SK-N-SH (cell line): ENCODE measurements at regions of chr11 and their contacts with region 1.

Region 1: DNA sequence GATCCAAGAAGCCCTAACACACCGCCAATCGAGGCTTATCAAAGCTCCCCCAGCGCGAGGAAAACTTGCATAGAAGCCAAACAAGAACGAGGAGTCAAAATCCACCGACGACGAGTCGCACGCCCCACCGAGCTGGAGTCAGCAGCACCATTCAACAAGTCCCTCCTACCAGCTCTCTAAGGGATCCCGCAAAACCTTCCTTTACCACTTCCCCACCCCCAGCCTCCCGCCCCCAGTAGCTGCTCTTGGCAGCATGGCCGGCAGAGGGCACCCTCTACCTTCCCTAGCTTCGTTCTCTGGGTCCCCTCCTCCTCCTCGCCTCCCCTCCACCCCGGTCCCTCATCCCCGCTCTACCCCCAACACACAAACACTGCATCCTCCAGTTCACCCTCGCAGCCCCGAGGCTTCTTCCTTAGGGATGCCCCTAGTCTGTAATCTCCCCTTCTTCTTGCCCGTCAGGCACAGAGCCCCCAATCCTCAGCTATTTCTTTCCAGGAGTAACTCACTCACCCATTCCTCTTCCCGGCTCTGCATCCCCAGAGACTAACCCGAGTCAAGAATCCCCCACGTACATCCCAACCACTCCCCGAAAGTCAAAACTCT is 1.3 kb downstream of the BDNF start:
- DNase-seq: peak; percentile 90
- H3K4me3 ChIP-seq: peak overlapping the region; percentile 84 to 92
- H3K27ac ChIP-seq: peak overlapping the region; percentile 62 to 73
- H3K4me1 ChIP-seq: peaks cover 6 to 21% of the 10 kb centered on the region in 2 experiments; a peak in 2 of 4 replicates
- H3K27me3 ChIP-seq: no peaks in the 10 kb centered on the region
- CTCF ChIP-seq: peak; percentile 75
- EP300 ChIP-seq: no peak
- RAD21 ChIP-seq: peak; percentile 80

Region 2: GRCh38 chr11:27649800-27650199 is 49.2 kb before region 1 on chr11:
- CTCF ChIA-PET with region 1: interaction called, 17 read pairs
- POLR2A ChIA-PET with region 1: no interaction called
- DNase-seq: no peak
- H3K4me3 ChIP-seq: no peak overlapping the region
- H3K27ac ChIP-seq: no peak overlapping the region
- H3K4me1 ChIP-seq: peaks cover 0 to 36% of the 10 kb centered on the region in 2 experiments; a peak in 2 of 4 replicates
- H3K27me3 ChIP-seq: no peaks in the 10 kb centered on the region
- CTCF ChIP-seq: no peak
- EP300 ChIP-seq: no peak
- RAD21 ChIP-seq: no peak

Region 3: DNA sequence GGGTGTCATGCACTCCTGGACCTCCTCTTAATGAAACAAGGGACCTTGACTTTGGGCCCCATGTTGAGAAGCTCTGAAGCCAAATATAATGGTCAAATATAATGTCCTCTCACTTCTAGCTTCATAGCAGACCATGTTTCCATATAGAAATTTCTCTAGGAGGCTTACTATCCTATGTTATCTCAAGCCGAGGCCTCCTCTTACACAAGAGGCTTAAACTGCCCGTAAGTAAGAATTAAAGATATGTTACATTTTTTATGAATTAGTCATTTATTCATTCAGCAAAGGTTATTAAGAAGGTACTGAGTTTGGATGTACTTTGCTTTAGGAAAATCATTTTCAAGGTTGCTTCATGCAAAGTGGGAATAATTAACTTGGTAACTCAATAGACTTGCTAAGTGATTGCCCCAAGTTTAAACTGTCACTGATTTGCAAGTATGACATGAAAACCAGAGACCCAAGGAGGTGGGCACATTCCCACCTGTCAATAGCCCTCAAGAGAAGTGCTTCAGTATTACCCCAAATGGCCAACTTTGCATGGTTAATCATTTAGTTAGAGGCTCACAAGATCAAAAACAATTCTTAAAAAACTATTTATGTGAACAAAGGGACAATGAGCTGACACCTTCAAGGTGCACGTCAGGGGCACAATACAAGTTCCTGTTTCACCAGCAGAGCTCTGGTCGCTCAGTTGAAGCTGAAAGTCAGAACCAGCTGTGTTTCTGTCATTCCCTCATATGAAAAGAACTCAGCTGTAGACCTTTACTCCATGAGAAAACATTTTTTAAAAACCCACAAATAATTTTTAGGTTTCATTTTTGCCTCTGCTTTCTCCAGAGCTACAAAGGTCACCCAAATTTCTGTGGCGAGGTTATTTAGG is 19.6 kb before region 1 on chr11:
- CTCF ChIA-PET with region 1: interaction called, 15 read pairs
- POLR2A ChIA-PET with region 1: no interaction called
- DNase-seq: no peak
- H3K4me3 ChIP-seq: no peak overlapping the region
- H3K27ac ChIP-seq: no peak overlapping the region
- H3K4me1 ChIP-seq: peaks cover 0 to 3% of the 10 kb centered on the region in 2 experiments; a peak in 1 of 4 replicates
- H3K27me3 ChIP-seq: no peaks in the 10 kb centered on the region
- CTCF ChIP-seq: no peak
- EP300 ChIP-seq: no peak
- RAD21 ChIP-seq: no peak

Region 4: GRCh38 chr11:27720277-27720830 is 21.4 kb after region 1 on chr11:
- CTCF ChIA-PET with region 1: interaction called, 243 read pairs
- POLR2A ChIA-PET with region 1: interaction called, 4 read pairs
- DNase-seq: peak; percentile 62
- H3K4me3 ChIP-seq: peak overlapping the region; percentile 77 to 90; a peak in 3 of 4 replicates
- H3K27ac ChIP-seq: no peak overlapping the region
- H3K4me1 ChIP-seq: peaks cover 5 to 21% of the 10 kb centered on the region in 2 experiments; a peak in 3 of 4 replicates
- H3K27me3 ChIP-seq: peaks cover 9% of the 10 kb centered on the region; the same call in 1 of the 2 replicates
- CTCF ChIP-seq: peak; percentile 57
- EP300 ChIP-seq: no peak
- RAD21 ChIP-seq: no peak

Region 5: GRCh38 chr11:28674433-28675103 is 975.6 kb after region 1 on chr11:
- CTCF ChIA-PET with region 1: interaction called, 10 read pairs
- POLR2A ChIA-PET with region 1: no interaction called
- DNase-seq: peak; percentile 28
- H3K4me3 ChIP-seq: no peak overlapping the region
- H3K27ac ChIP-seq: no peak overlapping the region
- H3K4me1 ChIP-seq: peaks cover 6 to 12% of the 10 kb centered on the region in 2 experiments; a peak in 3 of 4 replicates
- H3K27me3 ChIP-seq: no peaks in the 10 kb centered on the region
- CTCF ChIP-seq: peak; percentile 59
- EP300 ChIP-seq: peak in 1 of 2 experiments; percentile 30; a peak in 1 of 4 replicates
- RAD21 ChIP-seq: peak; percentile 63

Region 6: GRCh38 chr11:28697920-28698827 is 999.2 kb after region 1 on chr11:
- CTCF ChIA-PET with region 1: interaction called, 21 read pairs
- POLR2A ChIA-PET with region 1: no interaction called
- DNase-seq: peak; percentile 56
- H3K4me3 ChIP-seq: no peak overlapping the region; a peak in 1 of 4 replicates
- H3K27ac ChIP-seq: no peak overlapping the region
- H3K4me1 ChIP-seq: peaks cover 0 to 15% of the 10 kb centered on the region in 2 experiments; a peak in 2 of 4 replicates
- H3K27me3 ChIP-seq: no peaks in the 10 kb centered on the region
- CTCF ChIP-seq: peak; percentile 84
- EP300 ChIP-seq: no peak
- RAD21 ChIP-seq: peak; percentile 82

Region 7: GRCh38 chr11:29328961-29329441 is 1630.0 kb after region 1 on chr11:
- CTCF ChIA-PET with region 1: interaction called, 13 read pairs
- POLR2A ChIA-PET with region 1: no interaction called
- DNase-seq: peak; percentile 1
- H3K4me3 ChIP-seq: no peak overlapping the region
- H3K27ac ChIP-seq: peak overlapping the region in 1 of 2 experiments; percentile 55; a peak in 2 of 4 replicates
- H3K4me1 ChIP-seq: peaks cover 0 to 31% of the 10 kb centered on the region in 2 experiments; a peak in 1 of 4 replicates
- H3K27me3 ChIP-seq: no peaks in the 10 kb centered on the region
- CTCF ChIP-seq: peak; percentile 86
- EP300 ChIP-seq: peak in 1 of 2 experiments; percentile 32; a peak in 1 of 4 replicates
- RAD21 ChIP-seq: peak; percentile 64